Panc1 (cell line): ENCODE measurements at regions of chr2 and their contacts with region 1.

Region 1: GRCh38 chr2:191218292-191218898 is 26.8 kb upstream of the MYO1B start:
- DNase-seq: peak; percentile 88
- ATAC-seq: peak; percentile 75
- H3K4me3 ChIP-seq: no peak overlapping the region
- H3K27ac ChIP-seq: peak overlapping the region; percentile 75
- H3K4me1 ChIP-seq: peaks cover 10% of the 10 kb centered on the region
- H3K27me3 ChIP-seq: no peaks in the 10 kb centered on the region
- CTCF ChIP-seq: peak; percentile 80

Region 2: DNA sequence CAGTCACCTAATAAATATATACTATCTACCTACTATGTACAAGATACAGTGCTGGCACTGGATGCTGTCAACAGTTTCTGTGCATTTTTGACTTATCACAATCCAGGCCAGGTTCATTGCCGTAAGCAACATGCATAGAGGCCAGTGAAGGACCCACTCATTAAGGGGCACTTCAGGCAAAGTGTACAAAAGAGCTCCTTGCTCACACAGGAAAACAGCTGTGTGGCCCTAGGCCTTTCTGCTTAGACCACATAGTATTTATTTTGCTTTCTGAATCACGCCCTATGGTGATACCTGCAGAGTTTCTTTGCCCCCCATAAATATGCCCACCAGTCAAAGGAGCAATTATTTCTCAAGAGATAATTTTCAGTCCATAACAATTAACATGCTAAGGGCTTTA is 28.0 kb before region 1 on chr2:
- CTCF ChIA-PET with region 1: no interaction called
- POLR2A ChIA-PET with region 1: no interaction called
- in situ Hi-C with region 1: no loop called
- intact Hi-C with region 1: no loop called
- DNase-seq: no peak
- ATAC-seq: no peak; the same call in 1 of the 2 replicates
- H3K4me3 ChIP-seq: no peak overlapping the region
- H3K27ac ChIP-seq: no peak overlapping the region
- H3K4me1 ChIP-seq: no peaks in the 10 kb centered on the region
- H3K27me3 ChIP-seq: no peaks in the 10 kb centered on the region
- CTCF ChIP-seq: no peak

Region 3: GRCh38 chr2:191501561-191502168 is 283.3 kb after region 1 on chr2:
- CTCF ChIA-PET with region 1: interaction called, 6 read pairs
- POLR2A ChIA-PET with region 1: interaction called, 4 read pairs
- in situ Hi-C with region 1: no loop called
- intact Hi-C with region 1: loop called (anchors 1 kb)
- DNase-seq: no peak
- ATAC-seq: peak; percentile 78; the same call in 1 of the 2 replicates
- H3K4me3 ChIP-seq: no peak overlapping the region
- H3K27ac ChIP-seq: no peak overlapping the region
- H3K4me1 ChIP-seq: no peaks in the 10 kb centered on the region; the same call in 1 of the 2 replicates
- H3K27me3 ChIP-seq: no peaks in the 10 kb centered on the region
- CTCF ChIP-seq: peak; percentile 65; the same call in 1 of the 2 replicates